ENCODE measurements at regions of chr6 and their contacts with region 1.

Region 1: GRCh38 chr6:42745707-42746462 is at the start of gene TBCC:
- DNase-seq: peak; percentile 72
- ATAC-seq: peak; percentile 75
- H3K4me3 Mint-ChIP-seq: peak within 1 kb of the TSS; percentile 100
- H3K27ac Mint-ChIP-seq: peak within 1 kb of the TSS; percentile 100
- H3K4me1 Mint-ChIP-seq: peaks cover 32% of the 10 kb centered on the region
- H3K27me3 Mint-ChIP-seq: no peaks in the 10 kb centered on the region
- CTCF ChIP-seq: no peak
- total RNA-seq, gene TBCC: 41.5 and 41.7 TPM in 2 replicates

Region 2: GRCh38 chr6:41072676-41073623 is 1672.9 kb before region 1 on chr6 and contains the start of gene NFYA:
- CTCF ChIA-PET with region 1: no interaction called
- POLR2A ChIA-PET with region 1: no interaction called
- intact Hi-C with region 1: loop called (anchors 10 kb)
- DNase-seq: peak; percentile 100
- ATAC-seq: peak; percentile 63
- H3K4me3 Mint-ChIP-seq: peak within 1 kb of the TSS; percentile 96
- H3K27ac Mint-ChIP-seq: peak within 1 kb of the TSS; percentile 98
- H3K4me1 Mint-ChIP-seq: peaks cover 47% of the 10 kb centered on the region
- H3K27me3 Mint-ChIP-seq: no peaks in the 10 kb centered on the region
- CTCF ChIP-seq: no peak
- total RNA-seq, gene NFYA: 33.7 and 35.1 TPM in 2 replicates

Region 3: GRCh38 chr6:42711930-42712329 is 34.0 kb before region 1 on chr6:
- CTCF ChIA-PET with region 1: no interaction called
- POLR2A ChIA-PET with region 1: interaction called, 18 read pairs
- intact Hi-C with region 1: no loop called
- DNase-seq: no peak
- ATAC-seq: no peak
- H3K4me3 Mint-ChIP-seq: no peak overlapping the region
- H3K27ac Mint-ChIP-seq: no peak overlapping the region
- H3K4me1 Mint-ChIP-seq: no peaks in the 10 kb centered on the region
- H3K27me3 Mint-ChIP-seq: no peaks in the 10 kb centered on the region
- CTCF ChIP-seq: no peak

Region 4: DNA sequence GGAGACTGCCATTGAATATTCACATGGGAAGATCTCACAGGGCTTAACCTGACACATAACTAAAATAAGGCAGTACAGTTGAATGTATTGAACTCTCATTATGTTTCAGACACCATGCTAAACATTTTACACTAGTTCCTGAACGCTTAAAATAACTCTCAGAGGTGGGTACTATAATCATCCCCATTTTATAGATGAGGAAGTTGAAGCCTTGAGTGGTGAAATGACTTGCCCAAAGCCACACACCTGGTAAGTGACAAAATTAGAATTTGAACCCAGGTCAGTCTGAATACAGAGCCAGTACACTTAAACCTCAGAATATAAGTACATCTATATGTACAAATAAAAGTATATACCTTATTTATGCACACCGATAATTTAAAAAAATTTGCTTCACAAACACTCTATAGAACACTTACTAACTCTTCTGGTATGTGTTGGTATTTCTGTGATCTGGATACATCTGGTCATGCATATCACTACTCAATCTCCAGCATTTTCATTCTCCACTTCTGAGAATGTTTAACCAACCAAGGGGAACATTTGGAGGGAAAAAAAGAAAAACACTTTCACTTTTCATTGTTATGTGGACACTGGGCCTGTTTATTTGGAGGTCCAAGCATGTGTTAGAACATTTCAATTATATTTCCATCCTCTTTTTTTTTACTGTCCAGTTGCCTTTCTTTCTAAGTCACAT is 31.4 kb after region 1 on chr6:
- CTCF ChIA-PET with region 1: interaction called, 4 read pairs
- POLR2A ChIA-PET with region 1: interaction called, 1,220 read pairs
- intact Hi-C with region 1: loop called (anchors 1 kb)
- DNase-seq: no peak
- ATAC-seq: peak; percentile 15
- H3K4me3 Mint-ChIP-seq: peak overlapping the region; percentile 54
- H3K27ac Mint-ChIP-seq: peak overlapping the region; percentile 90
- H3K4me1 Mint-ChIP-seq: peaks cover 76% of the 10 kb centered on the region
- H3K27me3 Mint-ChIP-seq: no peaks in the 10 kb centered on the region
- CTCF ChIP-seq: no peak

Region 5: DNA sequence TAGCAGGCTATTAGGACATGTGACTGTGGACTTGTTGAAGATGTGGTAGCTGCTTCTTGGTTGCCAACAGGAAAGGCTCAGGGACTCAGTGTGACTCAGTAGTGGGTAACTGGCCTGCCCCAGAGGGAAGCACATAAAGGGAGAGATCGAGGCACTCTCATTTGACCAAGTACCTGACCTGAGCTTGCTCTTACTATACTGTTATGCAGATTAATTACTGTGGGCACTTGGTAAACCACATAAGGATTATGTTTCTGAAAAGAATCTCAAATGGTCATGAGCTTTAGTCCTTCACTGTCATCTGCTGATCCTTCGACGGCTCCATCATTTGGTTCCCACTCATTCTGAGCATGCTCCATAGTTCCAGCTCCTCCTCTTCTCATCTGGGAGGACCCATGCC is 85.4 kb after region 1 on chr6:
- CTCF ChIA-PET with region 1: no interaction called
- POLR2A ChIA-PET with region 1: interaction called, 17 read pairs
- intact Hi-C with region 1: no loop called
- DNase-seq: no peak
- ATAC-seq: no peak
- H3K4me3 Mint-ChIP-seq: no peak overlapping the region
- H3K27ac Mint-ChIP-seq: no peak overlapping the region
- H3K4me1 Mint-ChIP-seq: no peaks in the 10 kb centered on the region
- H3K27me3 Mint-ChIP-seq: no peaks in the 10 kb centered on the region
- CTCF ChIP-seq: no peak

Region 6: DNA sequence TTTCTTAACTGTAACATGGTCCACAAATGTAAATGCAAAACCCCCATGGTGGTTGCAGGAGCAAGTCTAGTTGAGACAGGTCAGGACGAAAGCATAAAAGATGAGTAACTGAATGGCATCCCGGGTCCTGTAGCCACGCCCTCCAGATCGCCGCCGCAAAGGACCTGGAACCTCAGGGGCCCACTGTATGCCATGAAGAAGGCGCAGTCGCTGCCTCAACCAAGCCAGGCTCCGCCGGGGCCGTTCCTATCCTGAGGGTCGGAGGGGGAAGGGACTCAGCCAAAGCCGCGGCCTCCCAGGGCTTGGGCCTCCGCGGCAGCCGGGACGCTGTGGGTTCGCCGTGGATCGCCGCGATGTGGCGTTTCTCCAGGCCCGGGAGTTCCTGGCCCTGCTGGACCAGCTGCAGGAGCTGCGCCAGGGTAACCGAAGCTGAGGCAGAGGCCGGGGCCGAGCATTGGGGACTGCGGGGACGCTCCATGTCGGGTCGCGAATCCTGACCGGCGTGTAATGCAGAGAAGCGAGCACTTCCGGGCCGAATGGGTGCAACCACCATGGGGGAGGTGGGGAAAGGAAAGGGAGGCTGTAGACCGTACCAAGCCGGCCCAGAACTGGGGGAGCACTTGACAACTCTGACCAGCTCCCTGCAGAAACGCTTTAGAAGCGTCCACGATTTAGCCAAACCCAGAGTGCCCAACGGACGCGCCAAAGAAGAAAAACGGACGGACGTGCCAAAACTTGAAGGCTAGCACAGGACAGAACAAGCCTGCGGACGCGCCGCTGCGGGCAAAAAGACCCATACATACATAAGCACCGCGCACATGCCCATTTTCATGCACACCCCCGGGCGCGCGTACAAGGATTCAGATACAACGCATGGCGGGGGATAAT is 144.7 kb after region 1 on chr6:
- CTCF ChIA-PET with region 1: no interaction called
- POLR2A ChIA-PET with region 1: interaction called, 52 read pairs
- intact Hi-C with region 1: loop called (anchors 1 kb)
- DNase-seq: peak; percentile 76
- ATAC-seq: peak; percentile 97
- H3K4me3 Mint-ChIP-seq: peak overlapping the region; percentile 97
- H3K27ac Mint-ChIP-seq: peak overlapping the region; percentile 93
- H3K4me1 Mint-ChIP-seq: peaks cover 44% of the 10 kb centered on the region
- H3K27me3 Mint-ChIP-seq: no peaks in the 10 kb centered on the region
- CTCF ChIP-seq: no peak

Region 7: DNA sequence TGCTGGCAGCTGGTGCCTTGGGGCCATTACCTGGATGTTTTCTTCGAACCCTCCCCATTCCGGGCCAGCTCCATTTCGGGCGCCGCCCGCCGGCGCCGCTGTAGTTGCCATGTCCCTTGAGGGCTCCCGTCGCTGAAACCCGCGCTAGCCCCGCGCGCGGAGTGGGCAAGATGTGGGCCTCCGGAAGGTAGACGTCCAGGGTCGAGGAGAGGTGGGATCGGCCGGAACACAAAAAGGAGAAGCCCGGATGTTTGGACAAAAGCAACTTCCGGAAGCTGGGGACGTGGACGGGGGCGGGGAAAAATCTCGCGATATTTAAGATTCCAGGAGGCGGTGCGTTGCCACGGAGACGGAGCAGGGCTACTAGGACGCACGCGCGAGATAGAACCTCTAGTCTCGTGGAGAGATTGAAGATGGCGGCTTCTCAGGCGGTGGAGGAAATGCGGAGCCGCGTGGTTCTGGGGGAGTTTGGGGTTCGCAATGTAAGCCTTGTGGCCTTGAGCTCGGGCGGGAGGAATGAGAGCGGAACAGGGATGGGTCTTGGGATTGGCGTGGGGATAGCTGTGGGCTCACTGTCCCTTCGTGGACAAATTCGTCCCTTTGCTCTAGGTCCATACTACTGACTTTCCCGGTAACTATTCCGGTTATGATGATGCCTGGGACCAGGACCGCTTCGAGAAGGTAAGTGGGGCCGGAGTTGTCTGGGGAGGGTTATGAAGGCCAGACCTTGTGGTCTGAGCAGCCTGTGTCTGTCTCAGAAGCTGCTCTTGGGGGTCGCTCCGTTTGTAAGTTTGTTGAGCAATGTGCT is 771.0 kb after region 1 on chr6 and contains the starts of genes POLR1C and YIPF3:
- CTCF ChIA-PET with region 1: no interaction called
- POLR2A ChIA-PET with region 1: interaction called, 13 read pairs
- intact Hi-C with region 1: no loop called
- DNase-seq: peak; percentile 87
- ATAC-seq: peak; percentile 94
- H3K4me3 Mint-ChIP-seq: no peak within 1 kb of the TSS
- H3K27ac Mint-ChIP-seq: peak within 1 kb of the TSS; percentile 54
- H3K4me1 Mint-ChIP-seq: peaks cover 29% of the 10 kb centered on the region
- H3K27me3 Mint-ChIP-seq: no peaks in the 10 kb centered on the region
- CTCF ChIP-seq: no peak
- total RNA-seq, gene POLR1C: 67.7 and 75.6 TPM in 2 replicates
- total RNA-seq, gene YIPF3: 51.7 and 59.1 TPM in 2 replicates

Measured in activated B cell treated with CpG ODN at 0.5 μM for 24 hours (primary cell).